H1 (cell line): ENCODE measurements at regions of chr5 and their contacts with region 1.

Region 1: DNA sequence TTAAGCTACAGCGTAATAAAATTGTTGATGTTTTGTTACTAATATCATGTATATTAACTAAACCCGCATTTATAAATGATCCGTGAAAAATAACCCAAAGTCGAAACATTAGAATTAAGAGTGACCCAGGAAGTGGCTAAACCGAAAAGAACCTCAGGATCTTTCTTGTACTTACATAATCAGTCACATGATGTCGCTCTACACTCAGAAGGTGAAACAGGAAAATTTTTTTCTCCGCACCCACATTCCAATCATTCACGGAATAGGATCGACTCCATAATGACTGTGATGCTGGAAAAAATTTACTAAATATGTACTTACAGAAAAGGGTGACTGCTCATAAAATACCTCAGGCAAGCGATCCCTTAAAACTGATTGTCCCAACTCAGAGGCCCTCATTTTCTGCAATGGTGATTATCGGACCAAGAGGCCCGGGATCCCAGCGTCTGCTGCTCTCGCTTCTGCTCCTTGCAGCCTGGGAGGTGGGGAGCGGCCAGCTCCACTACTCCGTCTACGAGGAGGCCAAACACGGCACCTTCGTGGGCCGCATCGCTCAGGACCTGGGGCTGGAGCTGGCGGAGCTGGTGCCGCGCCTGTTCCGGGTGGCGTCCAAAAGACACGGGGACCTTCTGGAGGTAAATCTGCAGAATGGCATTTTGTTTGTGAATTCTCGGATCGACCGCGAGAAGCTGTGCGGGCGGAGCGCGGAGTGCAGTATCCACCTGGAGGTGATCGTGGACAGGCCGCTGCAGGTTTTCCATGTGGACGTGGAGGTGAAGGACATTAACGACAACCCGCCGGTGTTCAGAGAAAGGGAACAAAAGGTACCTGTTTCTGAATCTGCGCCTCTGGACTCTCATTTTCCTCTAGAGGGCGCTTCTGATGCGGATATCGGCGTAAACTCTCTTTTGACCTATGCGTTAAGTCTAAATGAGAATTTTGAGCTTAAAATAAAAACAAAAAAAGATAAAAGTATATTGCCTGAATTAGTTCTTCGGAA is at the start of gene PCDHA12:
- DNase-seq: no peak
- H3K4me3 ChIP-seq: peak within 1 kb of the TSS; percentile 55 to 67 (median 65)
- H3K27ac ChIP-seq: no peak within 1 kb of the TSS
- H3K4me1 ChIP-seq: no peaks in the 10 kb centered on the region; a peak in 2 of 7 replicates
- H3K27me3 ChIP-seq: no peaks in the 10 kb centered on the region
- CTCF ChIP-seq: peak in 2 of 3 experiments; percentile 64 to 69; a peak in 3 of 4 replicates
- EP300 ChIP-seq: no peak
- POLR2A ChIP-seq: peak in 1 of 2 experiments; percentile 68; a peak in 2 of 3 replicates
- RAD21 ChIP-seq: peak; percentile 69 to 73
- total RNA-seq, gene PCDHA12: 9.3 and 10.6 TPM in 2 replicates

Region 2: GRCh38 chr5:140855772-140856674 is 19.3 kb before region 1 on chr5 and contains the start of gene PCDHA10:
- CTCF ChIA-PET with region 1: interaction called, 25 read pairs
- POLR2A ChIA-PET with region 1: interaction called, 7 read pairs
- DNase-seq: no peak
- H3K4me3 ChIP-seq: peak within 1 kb of the TSS; percentile 67 to 83 (median 72)
- H3K27ac ChIP-seq: no peak within 1 kb of the TSS; the same call in 1 of the 2 replicates
- H3K4me1 ChIP-seq: no peaks in the 10 kb centered on the region
- H3K27me3 ChIP-seq: no peaks in the 10 kb centered on the region
- CTCF ChIP-seq: peak in 2 of 3 experiments; percentile 40 to 47; a peak in 3 of 4 replicates
- EP300 ChIP-seq: no peak
- POLR2A ChIP-seq: no peak
- RAD21 ChIP-seq: peak; percentile 45 to 57; a peak in 3 of 4 replicates
- total RNA-seq, gene PCDHA10: 5.4 and 5.5 TPM in 2 replicates

Region 3: DNA sequence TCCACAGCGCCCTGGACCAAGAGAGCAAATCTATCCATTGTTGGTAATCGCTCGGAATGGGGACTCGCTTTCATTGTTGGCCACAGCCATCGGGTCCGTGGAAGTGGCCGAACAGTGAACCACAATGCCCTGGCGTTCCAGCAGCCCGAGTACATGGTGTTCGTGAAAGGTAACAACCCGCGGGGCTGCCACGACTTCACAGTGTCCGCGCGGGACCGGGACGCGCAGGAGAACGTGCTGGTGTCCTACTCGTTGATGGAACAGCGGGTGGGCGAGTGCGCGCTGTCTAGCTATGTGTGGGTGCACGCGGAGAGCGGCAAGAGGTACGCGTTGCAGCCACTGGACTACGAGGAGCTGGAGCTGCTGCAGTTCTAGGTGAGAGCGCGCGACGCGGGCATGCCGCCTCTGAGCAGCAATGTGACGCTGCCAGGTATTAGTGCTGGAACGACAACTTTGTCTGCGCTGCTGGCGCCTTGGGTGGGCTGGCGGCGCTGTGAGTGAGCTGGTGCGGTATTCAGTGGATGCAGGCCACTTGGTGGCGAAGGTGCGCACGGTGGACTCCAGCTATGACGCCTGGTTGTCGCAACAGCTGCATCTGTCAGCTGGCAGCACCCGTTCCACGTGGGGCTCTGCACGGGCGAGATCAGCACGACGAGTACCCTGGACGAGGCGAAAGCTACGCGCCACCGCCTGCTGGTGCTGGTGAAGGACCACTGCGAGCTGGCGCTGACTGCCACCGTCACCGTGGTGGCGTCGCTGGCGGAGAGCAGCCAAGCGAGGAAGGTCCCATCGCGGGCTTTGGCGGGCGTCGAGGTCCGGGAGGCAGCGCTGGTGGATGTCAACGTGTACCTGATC is 12.7 kb before region 1 on chr5:
- CTCF ChIA-PET with region 1: interaction called, 25 read pairs
- POLR2A ChIA-PET with region 1: no interaction called
- DNase-seq: no peak
- H3K4me3 ChIP-seq: no peak overlapping the region
- H3K27ac ChIP-seq: no peak overlapping the region
- H3K4me1 ChIP-seq: no peaks in the 10 kb centered on the region
- H3K27me3 ChIP-seq: no peaks in the 10 kb centered on the region
- CTCF ChIP-seq: no peak
- EP300 ChIP-seq: no peak
- POLR2A ChIP-seq: no peak
- RAD21 ChIP-seq: no peak

Region 4: DNA sequence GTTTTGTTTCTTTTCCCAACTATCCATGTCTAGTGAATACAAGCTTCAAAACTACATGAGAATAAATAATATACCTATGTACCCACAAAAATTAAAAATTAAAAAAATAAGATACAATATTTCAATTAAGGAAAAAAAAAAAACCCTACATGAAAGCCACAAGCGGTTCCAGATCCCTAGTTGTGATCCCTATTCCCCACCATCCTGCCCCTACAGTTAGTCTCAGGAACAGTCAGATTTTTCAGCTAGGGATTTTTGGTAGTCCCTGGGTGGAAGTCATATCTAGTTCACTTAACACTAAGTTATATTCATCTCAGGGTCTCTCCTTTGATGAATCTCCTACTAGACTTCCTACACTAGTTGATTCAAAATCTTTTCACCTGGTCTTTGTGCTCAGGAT is 157.3 kb after region 1 on chr5:
- CTCF ChIA-PET with region 1: interaction called, 32 read pairs
- POLR2A ChIA-PET with region 1: no interaction called
- DNase-seq: no peak
- H3K4me3 ChIP-seq: no peak overlapping the region
- H3K27ac ChIP-seq: no peak overlapping the region
- H3K4me1 ChIP-seq: no peaks in the 10 kb centered on the region
- H3K27me3 ChIP-seq: no peaks in the 10 kb centered on the region; a peak in 1 of 7 replicates
- CTCF ChIP-seq: peak in 2 of 3 experiments; percentile 18 to 32; a peak in 2 of 4 replicates
- EP300 ChIP-seq: no peak
- POLR2A ChIP-seq: no peak
- RAD21 ChIP-seq: peak; percentile 20 to 52

Region 5: GRCh38 chr5:141050622-141051525 is 175.5 kb after region 1 on chr5 and contains the start of gene PCDHB1:
- CTCF ChIA-PET with region 1: interaction called, 37 read pairs
- POLR2A ChIA-PET with region 1: interaction called, 3 read pairs
- DNase-seq: no peak
- H3K4me3 ChIP-seq: peak within 1 kb of the TSS; percentile 42 to 65 (median 60)
- H3K27ac ChIP-seq: no peak within 1 kb of the TSS
- H3K4me1 ChIP-seq: peaks cover 0 to 9% (median 3%) of the 10 kb centered on the region in 4 experiments; a peak in 5 of 7 replicates
- H3K27me3 ChIP-seq: peaks cover 0 to 14% (median 11%) of the 10 kb centered on the region in 4 experiments; a peak in 6 of 7 replicates
- CTCF ChIP-seq: no peak
- EP300 ChIP-seq: no peak
- POLR2A ChIP-seq: no peak
- RAD21 ChIP-seq: no peak
- total RNA-seq, gene PCDHB1: 0.04 and 0.08 TPM in 2 replicates